Activated CD8-positive, alpha-beta T cell treated with anti-CD3 and anti-CD28 coated beads for 36 hours (primary cell): ENCODE measurements at regions of chr17 and their contacts with region 1.

Region 1: DNA sequence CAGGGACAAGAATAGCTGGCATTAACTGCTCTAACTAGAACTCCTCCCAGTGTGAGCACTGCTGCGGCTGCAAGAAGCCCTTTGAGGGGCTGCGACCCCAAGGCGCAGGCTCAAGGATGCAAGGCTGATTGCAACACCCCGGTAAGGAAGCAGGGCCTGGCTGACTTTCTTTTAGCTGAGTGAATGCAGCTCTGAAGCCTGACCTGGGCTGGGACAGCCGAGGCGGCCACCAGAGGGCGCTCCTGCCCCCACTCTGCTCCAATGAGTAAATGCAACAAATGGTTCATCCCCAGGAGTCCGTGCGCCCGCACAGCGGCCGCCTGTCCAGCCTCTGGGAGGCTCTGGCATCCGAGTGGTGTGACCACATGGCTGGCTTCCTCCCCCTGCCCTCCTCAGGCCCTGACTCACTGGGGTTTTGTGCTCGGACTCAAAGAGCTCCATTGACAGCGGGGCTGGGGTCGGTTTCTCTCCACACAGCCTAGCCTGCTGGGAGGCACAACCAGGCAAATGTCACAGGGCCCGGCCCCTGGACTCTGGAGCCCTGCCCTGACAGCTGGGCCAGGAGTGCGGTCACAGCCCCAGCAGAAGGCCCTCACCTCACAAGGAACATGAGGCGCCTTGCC is at the start of gene SMIM5:
- DNase-seq: peak; percentile 88
- ATAC-seq: peak; percentile 93
- H3K4me3 Mint-ChIP-seq: no peak within 1 kb of the TSS
- H3K27ac Mint-ChIP-seq: no peak within 1 kb of the TSS
- H3K4me1 Mint-ChIP-seq: peaks cover 4% of the 10 kb centered on the region
- H3K27me3 Mint-ChIP-seq: no peaks in the 10 kb centered on the region
- CTCF ChIP-seq: peak; percentile 95
- total RNA-seq, gene SMIM5: 0.07 to 0.25 TPM

Region 2: DNA sequence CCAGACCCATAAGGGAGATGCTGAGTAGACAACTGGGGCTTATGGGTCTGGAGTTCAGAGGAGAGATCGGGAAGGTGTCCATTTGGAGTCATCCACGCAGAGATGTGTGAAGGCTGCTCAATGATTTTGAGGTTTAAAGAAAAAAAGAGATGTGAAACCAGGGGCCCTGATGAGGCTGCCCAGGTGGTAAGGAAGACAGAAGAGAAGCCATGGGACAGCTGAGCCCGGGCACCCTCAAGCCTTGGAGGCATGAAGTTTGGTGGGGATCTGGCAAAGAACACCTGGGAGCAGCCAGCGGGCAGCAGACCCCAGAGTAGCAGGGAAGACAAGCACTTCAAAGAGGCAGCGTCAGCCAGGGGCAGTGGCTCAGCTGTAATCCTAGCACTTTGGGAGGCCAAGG is 66.1 kb before region 1 on chr17:
- CTCF ChIA-PET with region 1: interaction called, 10 read pairs
- POLR2A ChIA-PET with region 1: no interaction called
- intact Hi-C with region 1: no loop called
- DNase-seq: no peak
- ATAC-seq: no peak
- H3K4me3 Mint-ChIP-seq: no peak overlapping the region
- H3K27ac Mint-ChIP-seq: no peak overlapping the region
- H3K4me1 Mint-ChIP-seq: no peaks in the 10 kb centered on the region
- H3K27me3 Mint-ChIP-seq: no peaks in the 10 kb centered on the region
- CTCF ChIP-seq: no peak

Region 3: DNA sequence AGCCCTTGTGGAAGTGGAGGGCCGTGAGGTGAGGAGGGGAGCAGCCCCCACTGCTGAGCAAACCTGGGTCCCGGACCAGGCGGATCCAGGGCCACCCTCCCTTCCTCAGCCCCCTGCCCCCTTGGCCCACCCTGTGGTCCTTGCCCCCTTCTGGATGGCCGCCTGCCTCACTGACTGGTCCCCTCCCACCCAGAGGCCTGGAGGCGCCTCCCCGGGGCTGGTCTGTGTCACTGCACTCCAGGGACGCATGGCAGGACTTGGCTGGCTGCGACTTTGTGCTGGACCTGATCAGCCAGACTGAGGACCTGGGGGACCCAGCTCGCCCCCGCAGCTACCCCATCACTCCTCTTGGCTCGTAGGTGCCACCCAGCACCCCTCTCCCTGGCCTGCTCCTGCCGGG is 19.0 kb before region 1 on chr17:
- CTCF ChIA-PET with region 1: interaction called, 21 read pairs
- POLR2A ChIA-PET with region 1: interaction called, 3 read pairs
- intact Hi-C with region 1: no loop called
- DNase-seq: no peak
- ATAC-seq: no peak
- H3K4me3 Mint-ChIP-seq: no peak overlapping the region
- H3K27ac Mint-ChIP-seq: no peak overlapping the region
- H3K4me1 Mint-ChIP-seq: no peaks in the 10 kb centered on the region
- H3K27me3 Mint-ChIP-seq: no peaks in the 10 kb centered on the region
- CTCF ChIP-seq: no peak

Region 4: GRCh38 chr17:75652915-75653549 is 20.1 kb after region 1 on chr17:
- CTCF ChIA-PET with region 1: interaction called, 52 read pairs
- POLR2A ChIA-PET with region 1: interaction called, 5 read pairs
- intact Hi-C with region 1: no loop called
- DNase-seq: peak; percentile 54
- ATAC-seq: peak; percentile 98
- H3K4me3 Mint-ChIP-seq: no peak overlapping the region
- H3K27ac Mint-ChIP-seq: peak overlapping the region; percentile 61
- H3K4me1 Mint-ChIP-seq: peaks cover 5% of the 10 kb centered on the region
- H3K27me3 Mint-ChIP-seq: no peaks in the 10 kb centered on the region
- CTCF ChIP-seq: peak; percentile 73

Region 5: GRCh38 chr17:75673487-75673886 is 40.5 kb after region 1 on chr17:
- CTCF ChIA-PET with region 1: interaction called, 21 read pairs
- POLR2A ChIA-PET with region 1: no interaction called
- intact Hi-C with region 1: no loop called
- DNase-seq: no peak
- ATAC-seq: no peak
- H3K4me3 Mint-ChIP-seq: no peak overlapping the region
- H3K27ac Mint-ChIP-seq: no peak overlapping the region
- H3K4me1 Mint-ChIP-seq: peaks cover 31% of the 10 kb centered on the region
- H3K27me3 Mint-ChIP-seq: no peaks in the 10 kb centered on the region
- CTCF ChIP-seq: no peak

Region 6: GRCh38 chr17:75703591-75703990 is 70.6 kb after region 1 on chr17:
- CTCF ChIA-PET with region 1: interaction called, 11 read pairs
- POLR2A ChIA-PET with region 1: no interaction called
- intact Hi-C with region 1: no loop called
- DNase-seq: no peak
- ATAC-seq: no peak
- H3K4me3 Mint-ChIP-seq: no peak overlapping the region
- H3K27ac Mint-ChIP-seq: no peak overlapping the region
- H3K4me1 Mint-ChIP-seq: no peaks in the 10 kb centered on the region
- H3K27me3 Mint-ChIP-seq: no peaks in the 10 kb centered on the region
- CTCF ChIP-seq: no peak

Region 7: GRCh38 chr17:75759443-75759842 is 126.5 kb after region 1 on chr17:
- CTCF ChIA-PET with region 1: interaction called, 41 read pairs
- POLR2A ChIA-PET with region 1: no interaction called
- intact Hi-C with region 1: no loop called
- DNase-seq: no peak
- ATAC-seq: no peak
- H3K4me3 Mint-ChIP-seq: no peak overlapping the region
- H3K27ac Mint-ChIP-seq: no peak overlapping the region
- H3K4me1 Mint-ChIP-seq: peaks cover 16% of the 10 kb centered on the region
- H3K27me3 Mint-ChIP-seq: no peaks in the 10 kb centered on the region
- CTCF ChIP-seq: no peak